PC-9 (cell line): ENCODE measurements at regions of chr2 and their contacts with region 1.

Region 1: GRCh38 chr2:163132850-163133249 is 294.3 kb upstream of the KCNH7 start:
- DNase-seq: no peak
- H3K4me3 ChIP-seq: no peak overlapping the region
- H3K27ac ChIP-seq: no peak overlapping the region
- H3K4me1 ChIP-seq: no peaks in the 10 kb centered on the region
- H3K27me3 ChIP-seq: no peaks in the 10 kb centered on the region
- CTCF ChIP-seq: peak; percentile 70

Region 2: DNA sequence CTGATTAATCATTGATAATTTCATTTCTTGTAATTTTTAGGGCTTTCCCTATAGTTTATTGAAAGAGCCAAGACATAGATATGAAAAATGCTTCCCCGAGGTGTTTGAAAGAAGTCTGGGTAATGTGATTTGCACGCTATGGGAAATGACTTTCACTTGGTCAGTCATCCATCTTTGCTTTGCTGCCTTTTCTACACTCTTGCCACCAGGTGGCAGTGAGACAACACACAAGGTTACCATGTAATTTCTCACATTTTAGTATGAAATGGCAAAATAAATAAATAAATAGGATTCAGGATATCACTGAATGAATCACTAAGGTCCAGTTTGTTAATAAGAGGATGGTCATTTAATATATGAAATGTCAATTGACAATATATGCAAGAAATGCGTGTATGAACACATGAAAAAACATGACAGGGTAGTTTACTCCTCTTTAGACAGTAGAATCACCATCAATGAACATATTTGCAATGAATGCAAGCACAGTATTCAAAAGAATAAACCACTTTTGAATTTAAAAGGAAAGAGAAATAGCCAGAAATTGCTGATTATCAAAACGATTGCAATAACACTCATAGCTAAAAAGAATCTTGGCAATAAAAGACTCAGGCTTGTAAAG is 242.0 kb before region 1 on chr2:
- CTCF ChIA-PET with region 1: no interaction called
- POLR2A ChIA-PET with region 1: no interaction called
- intact Hi-C with region 1: loop called (anchors 2 kb)
- DNase-seq: peak; percentile 0 to 37
- H3K4me3 ChIP-seq: peak overlapping the region; percentile 8; the same call in 1 of the 2 replicates
- H3K27ac ChIP-seq: no peak overlapping the region
- H3K4me1 ChIP-seq: no peaks in the 10 kb centered on the region
- H3K27me3 ChIP-seq: no peaks in the 10 kb centered on the region
- CTCF ChIP-seq: peak; percentile 82